PC-9 (cell line): ENCODE measurements at regions of chr17 and their contacts with region 1.

Region 1: DNA sequence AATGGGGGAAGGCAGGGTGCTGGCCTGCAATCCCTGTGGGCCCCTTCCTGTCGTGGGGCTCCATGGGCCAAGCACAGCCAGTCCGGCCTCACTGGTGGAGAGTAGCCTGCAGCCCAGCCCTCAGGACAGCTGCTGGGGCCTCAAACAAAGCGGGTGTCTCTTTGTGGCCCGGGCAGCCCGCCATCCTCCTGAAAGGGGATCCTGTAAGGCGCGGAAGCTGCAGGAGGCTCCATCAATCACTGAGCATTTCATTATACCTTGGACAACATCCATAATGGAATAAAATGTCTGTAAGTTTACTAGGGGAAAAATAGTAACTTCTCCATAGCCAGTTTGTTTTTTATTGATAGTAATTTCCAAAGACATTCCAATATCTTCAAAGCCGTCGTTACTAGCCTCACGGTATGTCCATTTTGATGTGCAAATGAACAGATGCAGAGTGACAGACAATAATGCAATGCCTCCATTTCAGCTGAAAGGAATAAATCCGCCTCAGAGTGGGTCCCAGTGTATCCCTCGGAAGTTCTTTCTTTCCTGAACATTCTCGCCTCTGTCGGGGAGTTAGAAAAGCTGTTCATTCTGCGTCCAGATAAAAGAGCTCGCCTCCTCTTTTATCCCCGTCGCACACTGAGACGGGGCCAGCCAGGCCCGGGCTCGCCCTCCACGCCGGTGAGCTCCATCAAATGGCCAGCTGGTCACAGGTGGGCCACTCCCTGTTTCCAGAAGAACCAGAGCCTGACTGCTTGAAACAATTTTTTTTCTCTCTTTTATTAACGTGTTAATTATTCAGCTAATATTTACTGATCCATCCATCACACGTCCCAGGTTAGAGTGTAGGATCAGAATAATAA is 14.4 kb downstream of the WSCD1 start:
- DNase-seq: no peak
- H3K4me3 ChIP-seq: no peak overlapping the region
- H3K27ac ChIP-seq: no peak overlapping the region
- H3K4me1 ChIP-seq: no peaks in the 10 kb centered on the region
- H3K27me3 ChIP-seq: peaks cover 96% of the 10 kb centered on the region
- CTCF ChIP-seq: no peak

Region 2: GRCh38 chr17:5986644-5987043 is 97.9 kb before region 1 on chr17:
- CTCF ChIA-PET with region 1: no interaction called
- POLR2A ChIA-PET with region 1: no interaction called
- intact Hi-C with region 1: no loop called
- DNase-seq: no peak
- H3K4me3 ChIP-seq: no peak overlapping the region
- H3K27ac ChIP-seq: no peak overlapping the region
- H3K4me1 ChIP-seq: no peaks in the 10 kb centered on the region
- H3K27me3 ChIP-seq: peaks cover 54% of the 10 kb centered on the region
- CTCF ChIP-seq: no peak

Region 3: GRCh38 chr17:6101706-6102105 is 17.2 kb after region 1 on chr17:
- CTCF ChIA-PET with region 1: no interaction called
- POLR2A ChIA-PET with region 1: interaction called, 11 read pairs
- intact Hi-C with region 1: no loop called
- DNase-seq: no peak
- H3K4me3 ChIP-seq: no peak overlapping the region
- H3K27ac ChIP-seq: no peak overlapping the region
- H3K4me1 ChIP-seq: no peaks in the 10 kb centered on the region
- H3K27me3 ChIP-seq: peaks cover 76% of the 10 kb centered on the region
- CTCF ChIP-seq: no peak